GM13977 (cell line): ENCODE measurements at regions of chr2 and their contacts with region 1.

Region 1: GRCh38 chr2:136384531-136385303 is 266.8 kb upstream of the CXCR4 start:
- DNase-seq: peak; percentile 31
- CTCF ChIP-seq: peak; percentile 78

Region 2: GRCh38 chr2:135913727-135914365 is 470.9 kb before region 1 on chr2:
- in situ Hi-C with region 1: loop called (anchors 5 kb)
- DNase-seq: peak; percentile 41
- CTCF ChIP-seq: peak; percentile 70

Region 3: GRCh38 chr2:136129601-136130000 is 255.1 kb before region 1 on chr2:
- in situ Hi-C with region 1: loop called (anchors 10 kb)
- DNase-seq: peak; percentile 33
- CTCF ChIP-seq: no peak